ENCODE measurements at regions of chr11 and their contacts with region 1.

Region 1: DNA sequence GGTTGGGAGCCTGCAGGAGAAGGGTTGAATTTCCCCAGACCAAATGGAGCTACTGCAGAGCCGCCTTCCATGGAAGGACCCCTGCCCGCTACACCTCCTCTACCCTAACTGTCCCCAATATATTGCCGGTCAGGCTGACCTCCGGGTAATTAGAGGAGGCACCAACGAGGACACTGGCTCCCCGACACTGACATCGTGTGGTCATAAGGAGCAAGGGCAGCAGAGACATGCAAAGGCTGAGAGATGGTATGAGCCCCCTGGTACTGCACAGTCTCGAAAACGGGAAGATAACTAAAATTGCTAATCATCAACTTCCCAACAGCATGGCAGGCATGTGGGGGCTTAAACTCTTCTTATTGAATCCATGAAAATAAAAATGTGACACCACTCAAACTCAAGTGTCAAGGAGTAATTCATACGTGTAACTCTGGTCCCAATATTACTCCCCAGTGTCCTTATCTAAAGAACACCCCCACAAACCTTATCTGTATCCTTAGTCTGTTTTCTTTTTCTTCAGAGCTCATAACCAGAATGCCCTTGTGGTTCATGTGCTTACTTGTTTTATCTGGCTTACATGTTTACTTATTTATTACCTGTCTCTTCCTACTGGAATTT is 4.4 kb downstream of the CAVIN3 start:
- H3K4me3 Mint-ChIP-seq: no peak overlapping the region
- H3K27ac Mint-ChIP-seq: no peak overlapping the region
- H3K4me1 Mint-ChIP-seq: peaks cover 23% of the 10 kb centered on the region
- H3K27me3 Mint-ChIP-seq: peaks cover 60% of the 10 kb centered on the region

Region 2: GRCh38 chr11:6022956-6023355 is 293.0 kb before region 1 on chr11:
- intact Hi-C with region 1: loop called (anchors 1 kb)
- H3K4me3 Mint-ChIP-seq: no peak overlapping the region
- H3K27ac Mint-ChIP-seq: no peak overlapping the region
- H3K4me1 Mint-ChIP-seq: no peaks in the 10 kb centered on the region
- H3K27me3 Mint-ChIP-seq: peaks cover 31% of the 10 kb centered on the region

Region 3: GRCh38 chr11:6544921-6545850 is 229.3 kb after region 1 on chr11:
- intact Hi-C with region 1: no loop called
- H3K4me3 Mint-ChIP-seq: no peak overlapping the region
- H3K27ac Mint-ChIP-seq: no peak overlapping the region
- H3K4me1 Mint-ChIP-seq: no peaks in the 10 kb centered on the region
- H3K27me3 Mint-ChIP-seq: no peaks in the 10 kb centered on the region

Region 4: GRCh38 chr11:6703247-6704063 is 387.5 kb after region 1 on chr11:
- intact Hi-C with region 1: no loop called
- H3K4me3 Mint-ChIP-seq: no peak overlapping the region
- H3K27ac Mint-ChIP-seq: no peak overlapping the region
- H3K4me1 Mint-ChIP-seq: peaks cover 17% of the 10 kb centered on the region
- H3K27me3 Mint-ChIP-seq: no peaks in the 10 kb centered on the region